MCF 10A (cell line): ENCODE measurements at regions of chr15 and their contacts with region 1.

Region 1: DNA sequence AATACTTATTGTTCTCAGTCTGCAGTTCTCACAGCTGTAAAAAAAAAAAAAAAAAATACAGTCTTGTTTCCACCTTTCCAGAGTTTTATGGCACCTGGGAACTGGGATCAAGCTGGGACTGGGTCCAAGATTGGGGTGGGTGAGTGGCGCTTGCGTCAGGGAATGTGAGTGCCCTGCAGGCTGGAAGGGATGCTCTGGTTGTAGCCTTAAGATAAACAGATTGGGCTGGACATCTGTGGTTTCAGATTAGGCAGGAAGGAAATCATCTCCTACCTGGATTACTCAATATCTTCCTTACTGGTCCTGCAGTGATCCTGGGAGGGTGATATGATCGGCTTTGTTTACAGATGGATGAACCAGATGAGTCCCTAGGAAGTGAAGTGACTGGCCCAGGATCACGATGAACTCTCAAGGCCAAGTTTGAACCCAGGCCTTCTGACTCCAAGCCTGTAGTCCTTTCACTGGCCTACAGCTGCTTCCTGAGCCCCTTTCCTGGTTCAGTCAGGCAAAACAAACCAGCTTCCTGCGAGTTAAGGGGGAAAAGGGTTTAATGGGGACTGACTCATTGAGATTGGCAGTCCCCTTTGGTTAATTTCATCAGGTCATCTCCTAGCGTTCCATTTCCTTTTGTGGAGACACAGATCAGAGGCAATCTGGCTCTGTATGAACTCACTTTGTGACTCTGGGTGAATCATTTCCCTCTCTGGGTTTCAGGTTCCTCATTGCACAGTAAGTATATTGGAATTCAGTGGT is 179.8 kb downstream of the THSD4 start:
- DNase-seq: peak; percentile 99
- H3K4me3 Mint-ChIP-seq: peak overlapping the region; percentile 45
- H3K27ac Mint-ChIP-seq: peak overlapping the region; percentile 95
- H3K4me1 Mint-ChIP-seq: peaks cover 54% of the 10 kb centered on the region
- H3K27me3 Mint-ChIP-seq: no peaks in the 10 kb centered on the region
- CTCF ChIP-seq: no peak

Region 2: DNA sequence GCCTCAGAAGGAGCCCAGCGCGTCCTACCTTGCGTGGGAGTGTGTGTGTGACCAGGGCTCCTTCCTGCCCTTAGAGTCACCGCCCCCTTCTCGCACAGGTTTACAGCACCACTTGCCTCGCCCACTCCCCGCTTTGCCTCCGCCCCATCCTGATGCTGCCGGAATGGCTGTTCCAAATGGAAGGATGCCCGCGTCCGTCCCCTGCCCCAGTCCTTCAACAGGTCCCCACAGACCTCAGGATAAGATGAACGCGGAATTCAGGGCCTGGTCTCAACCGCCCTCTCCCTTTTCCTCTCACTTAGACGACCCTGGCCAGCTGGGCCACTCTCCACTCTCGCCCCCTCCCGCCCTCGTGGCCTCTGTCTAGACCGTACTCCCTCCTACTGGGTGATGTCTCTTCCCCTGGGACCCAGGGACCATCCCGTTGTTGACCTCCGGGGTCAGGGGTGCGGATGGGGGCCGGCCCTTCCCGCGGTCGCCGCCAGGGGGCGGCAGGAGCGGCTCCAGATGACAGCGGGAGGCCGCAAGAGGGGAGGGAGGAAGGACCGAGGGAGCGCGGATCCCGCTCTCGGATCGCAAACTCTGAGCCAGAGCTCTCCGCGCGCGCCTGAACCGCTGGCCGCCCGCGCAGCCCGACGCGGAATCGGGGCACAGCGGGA is 180.0 kb before region 1 on chr15 and contains the start of gene THSD4:
- CTCF ChIA-PET with region 1: interaction called, 5 read pairs
- POLR2A ChIA-PET with region 1: no interaction called
- intact Hi-C with region 1: loop called (anchors 1 kb)
- DNase-seq: peak; percentile 76
- H3K4me3 Mint-ChIP-seq: peak within 1 kb of the TSS; percentile 65
- H3K27ac Mint-ChIP-seq: peak within 1 kb of the TSS; percentile 40
- H3K4me1 Mint-ChIP-seq: peaks cover 36% of the 10 kb centered on the region
- H3K27me3 Mint-ChIP-seq: no peaks in the 10 kb centered on the region
- CTCF ChIP-seq: peak; percentile 97
- total RNA-seq, gene THSD4: 36.3 and 38.2 TPM in 2 replicates

Region 3: GRCh38 chr15:71237456-71238188 is 57.4 kb before region 1 on chr15:
- CTCF ChIA-PET with region 1: no interaction called
- POLR2A ChIA-PET with region 1: no interaction called
- intact Hi-C with region 1: loop called (anchors 1 kb)
- DNase-seq: peak; percentile 92
- H3K4me3 Mint-ChIP-seq: no peak overlapping the region
- H3K27ac Mint-ChIP-seq: no peak overlapping the region
- H3K4me1 Mint-ChIP-seq: peaks cover 26% of the 10 kb centered on the region
- H3K27me3 Mint-ChIP-seq: no peaks in the 10 kb centered on the region
- CTCF ChIP-seq: no peak

Region 4: GRCh38 chr15:71278989-71279756 is 15.9 kb before region 1 on chr15:
- CTCF ChIA-PET with region 1: interaction called, 5 read pairs
- POLR2A ChIA-PET with region 1: interaction called, 41 read pairs
- intact Hi-C with region 1: loop called (anchors 1 kb)
- DNase-seq: peak; percentile 97
- H3K4me3 Mint-ChIP-seq: peak overlapping the region; percentile 47
- H3K27ac Mint-ChIP-seq: peak overlapping the region; percentile 87
- H3K4me1 Mint-ChIP-seq: peaks cover 60% of the 10 kb centered on the region
- H3K27me3 Mint-ChIP-seq: no peaks in the 10 kb centered on the region
- CTCF ChIP-seq: no peak

Region 5: GRCh38 chr15:71743861-71744382 is 448.9 kb after region 1 on chr15:
- CTCF ChIA-PET with region 1: no interaction called
- POLR2A ChIA-PET with region 1: interaction called, 4 read pairs
- intact Hi-C with region 1: loop called (anchors 10 kb)
- DNase-seq: peak; percentile 72
- H3K4me3 Mint-ChIP-seq: no peak overlapping the region
- H3K27ac Mint-ChIP-seq: no peak overlapping the region
- H3K4me1 Mint-ChIP-seq: peaks cover 19% of the 10 kb centered on the region
- H3K27me3 Mint-ChIP-seq: no peaks in the 10 kb centered on the region
- CTCF ChIP-seq: peak; percentile 56